ENCODE measurements at regions of chr5 and their contacts with region 1.

Region 1: GRCh38 chr5:75734913-75735789 is 17.9 kb upstream of the POC5 start:
- ATAC-seq: peak; percentile 52 to 94 (median 58)
- H3K4me3 ChIP-seq: no peak overlapping the region
- H3K27ac ChIP-seq: no peak overlapping the region
- H3K4me1 ChIP-seq: no peaks in the 10 kb centered on the region

Region 2: DNA sequence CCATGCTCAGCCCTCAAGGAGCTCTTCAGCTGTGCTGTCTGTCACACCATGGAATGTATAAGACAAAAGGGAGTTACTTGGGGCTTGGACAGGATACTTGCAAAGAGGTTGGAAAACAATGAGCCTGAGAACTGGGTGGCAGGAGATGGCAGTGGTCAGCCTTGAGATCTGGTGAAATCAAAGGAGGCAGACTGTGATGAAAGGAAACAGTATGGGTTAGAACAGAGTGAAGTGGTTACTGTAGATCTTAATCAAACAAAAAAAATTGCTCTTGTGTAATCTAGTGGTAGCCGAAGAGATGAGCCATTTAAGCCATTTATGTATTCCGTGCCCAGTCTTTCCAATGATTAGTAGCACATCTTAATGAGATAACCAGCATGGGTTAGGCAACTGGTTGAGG is 490.2 kb after region 1 on chr5:
- in situ Hi-C with region 1: loop called in 1 of 9 experiments (anchors 25 kb)
- ATAC-seq: no peak
- H3K4me3 ChIP-seq: no peak overlapping the region
- H3K27ac ChIP-seq: no peak overlapping the region
- H3K4me1 ChIP-seq: peaks cover 8 to 14% of the 10 kb centered on the region in 2 donors

Region 3: GRCh38 chr5:76256116-76256889 is 521.2 kb after region 1 on chr5:
- in situ Hi-C with region 1: loop called in 1 of 9 experiments (anchors 25 kb)
- ATAC-seq: peak; percentile 97 to 98 (median 98)
- H3K4me3 ChIP-seq: no peak overlapping the region
- H3K27ac ChIP-seq: no peak overlapping the region
- H3K4me1 ChIP-seq: peaks cover 4 to 22% of the 10 kb centered on the region in 2 donors

Region 4: DNA sequence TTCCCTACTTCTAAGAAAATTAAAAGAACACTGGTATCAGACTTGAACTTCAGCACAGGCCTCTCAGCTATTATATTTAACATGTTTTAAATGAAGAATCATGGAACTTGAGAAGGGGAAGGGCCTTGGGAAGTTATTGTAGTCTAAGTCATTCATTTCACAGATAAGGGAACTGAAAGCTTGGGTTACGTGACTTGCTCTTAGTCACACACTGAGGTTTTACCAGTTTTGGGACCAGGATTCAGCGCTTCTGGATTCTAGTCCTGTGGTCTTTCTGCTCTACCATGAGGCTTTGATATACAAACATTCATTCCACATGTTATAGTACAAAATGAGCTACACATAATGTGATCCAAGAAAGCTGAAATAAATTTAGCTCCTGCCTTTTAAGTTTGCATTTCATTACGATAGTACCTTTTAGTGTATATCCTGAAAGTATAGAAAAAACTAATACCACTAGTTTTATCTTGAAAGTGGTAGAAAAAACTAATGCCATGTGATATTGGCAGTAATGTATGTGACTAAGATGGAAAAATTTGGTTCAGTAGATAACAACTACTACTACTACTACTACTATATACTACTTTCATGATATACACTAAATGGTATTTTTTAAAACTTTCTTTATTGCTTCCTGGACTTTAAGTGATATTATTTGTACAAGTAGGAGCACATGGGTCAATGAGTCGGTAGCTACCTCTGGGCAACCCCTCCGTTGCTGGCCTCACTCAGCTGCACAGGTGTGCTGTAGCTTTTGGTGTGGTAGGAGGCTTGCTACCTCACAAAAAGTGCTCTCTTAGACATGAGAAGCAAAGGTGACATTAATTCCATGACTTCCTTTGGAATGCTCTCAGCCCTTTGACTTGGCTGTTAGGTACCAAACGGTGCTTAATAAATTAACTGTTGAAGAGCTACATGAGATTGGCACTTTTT is 847.3 kb after region 1 on chr5:
- in situ Hi-C with region 1: loop called in 1 of 9 experiments (anchors 25 kb)
- ATAC-seq: no peak
- H3K4me3 ChIP-seq: no peak overlapping the region
- H3K27ac ChIP-seq: no peak overlapping the region
- H3K4me1 ChIP-seq: no peaks in the 10 kb centered on the region

Measured in motor neuron (in vitro differentiated cells).